PC-9 (cell line): ENCODE measurements at regions of chr2 and their contacts with region 1.

Region 1: GRCh38 chr2:224479826-224480225 is 77.9 kb upstream of the FAM124B start:
- DNase-seq: no peak
- H3K4me3 ChIP-seq: no peak overlapping the region
- H3K27ac ChIP-seq: no peak overlapping the region
- H3K4me1 ChIP-seq: peaks cover 23% of the 10 kb centered on the region
- H3K27me3 ChIP-seq: no peaks in the 10 kb centered on the region
- CTCF ChIP-seq: no peak

Region 2: GRCh38 chr2:224357098-224357901 is 122.5 kb before region 1 on chr2:
- CTCF ChIA-PET with region 1: no interaction called
- POLR2A ChIA-PET with region 1: no interaction called
- intact Hi-C with region 1: loop called (anchors 1 kb)
- DNase-seq: peak; percentile 72 to 77
- H3K4me3 ChIP-seq: no peak overlapping the region
- H3K27ac ChIP-seq: no peak overlapping the region
- H3K4me1 ChIP-seq: peaks cover 16% of the 10 kb centered on the region
- H3K27me3 ChIP-seq: no peaks in the 10 kb centered on the region
- CTCF ChIP-seq: peak; percentile 100

Region 3: GRCh38 chr2:224492531-224492930 is 12.7 kb after region 1 on chr2:
- CTCF ChIA-PET with region 1: no interaction called
- POLR2A ChIA-PET with region 1: no interaction called
- intact Hi-C with region 1: loop called (anchors 1 kb)
- DNase-seq: no peak
- H3K4me3 ChIP-seq: no peak overlapping the region
- H3K27ac ChIP-seq: no peak overlapping the region
- H3K4me1 ChIP-seq: 0 out of 2 replicates have a peak, but pooled peaks cover 8% of the 10 kb centered on the region
- H3K27me3 ChIP-seq: no peaks in the 10 kb centered on the region
- CTCF ChIP-seq: no peak

Region 4: GRCh38 chr2:224574423-224575084 is 94.7 kb after region 1 on chr2:
- CTCF ChIA-PET with region 1: no interaction called
- POLR2A ChIA-PET with region 1: interaction called, 12 read pairs
- intact Hi-C with region 1: no loop called
- DNase-seq: no peak
- H3K4me3 ChIP-seq: no peak overlapping the region
- H3K27ac ChIP-seq: peak overlapping the region; percentile 5; the same call in 1 of the 2 replicates
- H3K4me1 ChIP-seq: peaks cover 50% of the 10 kb centered on the region
- H3K27me3 ChIP-seq: no peaks in the 10 kb centered on the region
- CTCF ChIP-seq: no peak

Region 5: GRCh38 chr2:224594840-224595239 is 115.0 kb after region 1 on chr2:
- CTCF ChIA-PET with region 1: no interaction called
- POLR2A ChIA-PET with region 1: no interaction called
- intact Hi-C with region 1: loop called (anchors 1 kb)
- DNase-seq: peak in 1 of 2 experiments; percentile 20
- H3K4me3 ChIP-seq: no peak overlapping the region
- H3K27ac ChIP-seq: no peak overlapping the region
- H3K4me1 ChIP-seq: peaks cover 26% of the 10 kb centered on the region
- H3K27me3 ChIP-seq: no peaks in the 10 kb centered on the region
- CTCF ChIP-seq: no peak

Region 6: DNA sequence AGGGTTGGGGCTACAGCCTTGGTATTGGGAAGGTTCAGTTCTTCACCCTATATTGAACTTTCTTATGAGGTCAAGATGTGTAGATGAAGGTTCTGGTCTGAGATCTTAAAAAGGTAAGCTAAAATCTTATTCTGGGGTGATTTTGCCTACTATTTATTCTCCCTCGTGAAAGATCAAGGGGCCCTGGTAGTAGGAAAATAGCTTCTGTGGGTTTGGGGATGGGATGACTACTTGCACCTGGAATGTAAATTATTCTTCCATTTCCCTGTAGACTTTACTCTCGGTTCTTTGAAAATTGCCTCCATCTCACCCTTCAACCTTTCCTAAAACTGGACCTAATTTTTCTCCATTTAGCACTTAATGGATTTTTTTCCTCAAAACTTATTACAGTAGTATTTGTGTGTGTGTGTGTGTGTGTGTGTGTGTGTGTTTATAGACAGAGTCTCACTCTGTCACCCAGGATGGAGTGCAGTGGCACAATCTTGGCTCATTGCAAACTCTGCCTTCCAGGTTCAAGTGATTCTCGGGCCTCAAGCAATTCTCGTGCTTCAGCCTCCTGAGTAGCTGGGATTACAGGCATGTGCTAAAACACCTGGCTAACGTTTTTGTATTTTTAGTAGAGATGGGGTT is 198.9 kb after region 1 on chr2:
- CTCF ChIA-PET with region 1: no interaction called
- POLR2A ChIA-PET with region 1: no interaction called
- intact Hi-C with region 1: loop called (anchors 1 kb)
- DNase-seq: peak; percentile 52 to 90
- H3K4me3 ChIP-seq: peak overlapping the region; percentile 33; the same call in 1 of the 2 replicates
- H3K27ac ChIP-seq: peak overlapping the region; percentile 92
- H3K4me1 ChIP-seq: peaks cover 26% of the 10 kb centered on the region
- H3K27me3 ChIP-seq: no peaks in the 10 kb centered on the region
- CTCF ChIP-seq: no peak